ENCODE measurements at regions of chr4 and their contacts with region 1.

Region 1: GRCh38 chr4:153276971-153277370 is 67.5 kb upstream of the MND1 start:
- DNase-seq: no peak

Region 2: GRCh38 chr4:153159728-153160221 is 117.2 kb before region 1 on chr4:
- intact Hi-C with region 1: no loop called
- DNase-seq: no peak

Region 3: GRCh38 chr4:153292897-153293741 is 16.1 kb after region 1 on chr4:
- intact Hi-C with region 1: loop called in 1 of 2 experiments (anchors 1 kb)
- DNase-seq: no peak

Region 4: DNA sequence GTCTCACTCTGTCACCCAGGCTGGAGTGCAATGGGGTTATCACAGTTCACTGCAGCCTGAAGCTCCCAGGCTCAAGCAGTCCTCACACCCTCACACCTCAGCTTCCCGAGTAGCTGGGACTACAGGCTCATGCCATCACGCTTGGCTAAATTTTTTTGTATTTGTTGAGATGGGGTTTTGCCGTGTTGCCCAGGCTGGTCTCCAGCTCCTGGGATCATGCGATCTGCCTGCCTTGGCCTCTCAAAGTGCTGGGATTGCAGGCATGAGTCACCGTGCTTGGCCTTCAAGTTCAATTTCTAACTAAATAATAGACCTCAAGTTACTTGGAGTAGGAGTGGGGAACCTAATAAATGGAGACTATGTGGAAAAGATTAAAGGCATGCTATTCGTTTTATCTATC is 116.4 kb after region 1 on chr4:
- intact Hi-C with region 1: no loop called
- DNase-seq: peak; percentile 85

Region 5: DNA sequence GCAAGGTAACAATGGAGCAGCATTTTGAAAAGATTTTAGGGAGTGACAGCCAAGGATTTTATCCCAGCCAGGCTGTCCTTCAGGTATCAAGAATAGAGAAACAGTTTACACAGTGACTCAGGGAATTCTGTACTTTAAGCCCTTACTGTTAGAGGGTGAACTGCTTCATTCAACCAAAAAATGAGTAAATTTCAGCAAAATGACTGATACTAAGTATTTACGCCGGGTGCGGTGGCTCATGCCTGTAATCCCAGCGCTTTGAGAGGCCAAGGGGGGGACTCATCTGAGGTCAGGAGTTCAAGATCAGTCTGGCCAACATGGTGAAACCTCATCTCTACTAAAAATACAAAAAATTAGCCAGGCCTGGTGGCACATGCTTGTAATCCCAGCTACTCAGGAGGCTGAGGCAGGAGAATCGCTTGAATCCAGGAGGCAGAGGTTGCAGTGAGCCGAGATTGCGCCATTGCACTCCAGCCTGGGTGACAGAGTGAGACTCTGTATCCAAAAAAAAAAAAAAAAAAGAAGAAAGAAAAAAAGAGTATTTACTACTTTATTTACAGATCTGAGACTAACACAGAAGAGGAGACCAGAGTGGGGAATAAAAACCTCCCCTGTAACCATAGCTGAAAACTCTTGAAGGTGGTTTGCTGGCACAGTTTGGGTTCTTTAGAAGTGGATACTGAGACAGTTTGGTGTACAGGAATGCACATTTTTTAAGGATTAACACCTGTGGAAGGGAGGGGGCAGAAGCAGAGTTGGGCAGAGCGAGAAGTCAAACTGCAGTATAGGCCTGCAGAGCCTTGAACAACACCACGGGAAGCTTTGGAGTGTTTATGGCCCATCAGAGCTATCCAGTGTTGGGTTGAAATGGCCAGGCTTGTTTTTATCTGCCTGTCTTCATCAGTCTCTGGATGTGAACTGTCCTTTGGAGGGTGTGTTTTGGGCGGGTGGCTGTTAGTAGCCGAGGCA is 229.7 kb after region 1 on chr4:
- intact Hi-C with region 1: no loop called
- DNase-seq: no peak

Measured in posterior vena cava (tissue), 2 donors.